Common myeloid progenitor, CD34-positive (primary cell): ENCODE measurements at regions of chr16 and their contacts with region 1.

Region 1: DNA sequence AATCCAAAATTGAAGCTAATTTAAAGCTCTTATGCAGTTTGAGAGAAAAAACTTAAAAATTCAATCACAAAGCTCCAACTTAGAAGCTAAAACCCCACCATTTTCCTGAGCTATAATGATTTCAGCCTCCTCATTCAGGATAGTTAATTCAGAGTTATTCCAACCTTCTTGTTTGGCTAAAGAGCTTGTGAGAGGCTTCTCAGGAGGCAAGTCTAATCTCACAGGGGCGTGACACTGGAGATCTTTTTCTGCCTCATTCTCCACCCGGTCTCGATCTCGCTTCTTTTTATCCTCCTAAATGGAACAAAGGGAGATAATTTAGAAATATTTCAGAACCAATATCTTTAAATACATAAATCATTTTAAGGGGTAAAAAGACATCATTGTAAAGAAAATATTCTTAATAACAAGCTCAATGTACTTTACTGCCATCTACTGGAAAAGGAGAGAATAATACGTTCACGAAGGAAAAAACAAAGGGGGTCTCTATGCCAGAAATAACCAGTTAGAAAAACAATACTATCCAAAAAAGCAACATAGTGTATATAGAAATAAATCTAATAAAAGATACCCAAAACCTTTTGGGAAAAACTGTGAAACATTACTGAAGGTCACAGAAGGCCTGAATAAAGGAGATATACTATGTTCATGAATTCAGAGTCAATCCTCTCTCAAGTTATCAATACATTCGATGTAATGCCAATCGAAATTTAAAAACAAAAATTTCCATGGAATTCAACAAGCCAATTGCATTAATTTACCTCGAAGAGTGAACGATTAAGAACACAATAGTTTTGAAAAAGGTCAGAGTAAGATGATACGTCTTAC is 13.9 kb downstream of the BRD7 start:
- DNase-seq: peak; percentile 30 to 58 (median 55)
- H3K4me3 ChIP-seq: no peak overlapping the region
- H3K27ac ChIP-seq: peak overlapping the region in 1 of 2 experiments; percentile 38
- H3K4me1 ChIP-seq: no peaks in the 10 kb centered on the region
- H3K27me3 ChIP-seq: no peaks in the 10 kb centered on the region

Region 2: DNA sequence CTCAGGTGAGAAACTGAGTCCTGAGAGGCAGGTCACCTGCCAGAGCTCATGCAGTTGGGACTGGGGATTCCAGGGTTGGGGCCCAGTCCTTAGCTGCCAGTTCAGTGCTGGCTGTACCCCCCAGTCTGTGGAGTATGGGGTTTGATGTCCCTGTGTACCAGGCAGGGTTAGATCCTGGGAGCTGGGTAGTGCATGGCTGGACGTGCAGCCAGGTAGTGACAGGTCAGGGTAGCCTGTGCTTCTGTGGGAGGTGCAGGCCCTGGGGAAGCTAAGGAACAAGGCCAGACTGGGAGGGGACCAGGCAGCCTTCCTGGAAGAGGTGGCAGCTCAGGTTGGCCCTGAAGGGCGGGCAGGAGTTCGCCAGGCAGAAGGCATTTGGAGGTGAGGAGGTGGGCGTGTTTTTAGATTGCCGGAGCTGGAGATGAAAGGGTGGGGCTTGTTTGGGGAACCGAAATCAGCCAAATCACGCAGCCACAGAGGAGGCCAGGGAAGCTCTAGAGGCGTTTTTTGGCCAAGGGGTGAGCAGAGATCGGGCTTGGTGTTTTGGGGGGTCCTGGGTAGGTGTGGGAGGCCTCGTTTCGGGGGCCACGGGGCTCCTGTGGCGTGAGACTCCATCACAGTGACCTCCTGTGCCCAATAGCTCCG is 81.0 kb before region 1 on chr16:
- CTCF ChIA-PET with region 1: interaction called, 15 read pairs
- POLR2A ChIA-PET with region 1: no interaction called
- DNase-seq: peak; percentile 83 to 96 (median 95)
- H3K4me3 ChIP-seq: peak overlapping the region in 6 of 7 experiments; percentile 6 to 71 (median 67)
- H3K27ac ChIP-seq: peak overlapping the region; percentile 72 to 84
- H3K4me1 ChIP-seq: peaks cover 4 to 93% (median 63%) of the 10 kb centered on the region in 4 experiments
- H3K27me3 ChIP-seq: no peaks in the 10 kb centered on the region

Region 3: DNA sequence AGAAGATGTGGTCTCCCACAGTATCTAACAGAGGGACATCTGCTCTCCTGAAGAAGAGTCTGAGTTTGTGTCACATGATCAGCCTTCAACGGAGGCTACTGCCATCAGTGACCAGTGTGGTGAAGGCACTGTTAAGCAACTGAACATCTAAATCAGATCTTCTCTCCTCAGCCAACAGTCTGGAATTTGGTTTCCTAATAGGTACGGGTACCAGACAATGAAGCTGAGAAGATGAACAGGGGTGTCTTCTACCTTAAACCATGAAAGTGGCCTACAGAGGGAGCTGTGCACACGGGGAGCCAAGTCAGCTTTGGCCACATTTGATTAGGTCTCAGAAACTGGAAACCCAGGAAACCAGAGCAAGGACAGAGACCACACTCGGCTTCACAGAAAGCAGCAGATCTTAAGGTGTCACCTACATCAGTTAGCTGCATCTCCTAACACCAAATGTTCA is 27.9 kb before region 1 on chr16:
- CTCF ChIA-PET with region 1: interaction called, 40 read pairs
- POLR2A ChIA-PET with region 1: interaction called, 4 read pairs
- DNase-seq: peak; percentile 61 to 71 (median 65)
- H3K4me3 ChIP-seq: no peak overlapping the region
- H3K27ac ChIP-seq: no peak overlapping the region
- H3K4me1 ChIP-seq: peaks cover 0 to 18% (median 4%) of the 10 kb centered on the region in 4 experiments
- H3K27me3 ChIP-seq: no peaks in the 10 kb centered on the region

Region 4: DNA sequence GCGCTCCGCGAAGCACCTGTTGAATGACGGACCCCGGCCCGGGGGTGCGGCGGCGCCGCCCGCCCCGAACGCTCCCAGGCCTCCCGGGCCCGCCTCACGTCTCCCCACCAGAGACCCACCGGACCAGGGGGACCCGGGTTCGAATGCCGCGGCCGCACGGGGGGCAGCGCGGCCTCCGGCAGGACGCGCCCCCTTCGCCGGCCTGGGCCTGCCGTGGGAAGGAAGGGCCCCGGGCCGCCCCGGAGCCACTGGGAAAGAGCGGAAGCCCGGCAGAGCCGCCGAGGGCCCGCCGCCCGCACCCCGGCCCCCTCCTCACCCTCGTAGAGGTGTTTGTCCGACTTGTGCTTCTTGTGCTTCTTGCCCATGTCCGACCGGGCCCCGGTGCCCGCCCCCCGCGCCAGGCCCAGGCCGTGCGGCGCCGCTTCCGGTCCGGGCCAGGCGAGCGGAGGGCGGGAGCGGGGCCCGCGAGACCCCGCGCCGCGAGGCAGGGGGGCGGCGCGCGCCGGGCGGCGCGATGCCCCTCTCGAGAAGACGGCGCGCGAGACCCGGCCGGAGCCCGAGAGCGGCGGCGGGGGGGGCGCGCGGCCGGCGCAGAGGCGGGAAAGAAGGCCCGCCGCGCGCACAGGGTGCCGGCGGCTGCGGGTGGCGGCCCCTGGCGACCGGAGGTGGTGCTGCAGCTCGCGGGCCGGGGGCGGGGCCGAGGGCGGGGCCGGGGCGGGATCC is 13.7 kb after region 1 on chr16 and contains the start of gene BRD7:
- CTCF ChIA-PET with region 1: interaction called, 19 read pairs
- POLR2A ChIA-PET with region 1: interaction called, 4 read pairs
- DNase-seq: peak; percentile 57 to 82 (median 76)
- H3K4me3 ChIP-seq: peak within 1 kb of the TSS; percentile 72 to 89 (median 81)
- H3K27ac ChIP-seq: peak within 1 kb of the TSS; percentile 60 to 79
- H3K4me1 ChIP-seq: peaks cover 7 to 33% (median 22%) of the 10 kb centered on the region in 4 experiments
- H3K27me3 ChIP-seq: no peaks in the 10 kb centered on the region